PC-9 (cell line): ENCODE measurements at regions of chr20 and their contacts with region 1.

Region 1: GRCh38 chr20:35849706-35850105 is 77.9 kb downstream of the PHF20 start:
- DNase-seq: no peak
- H3K4me3 ChIP-seq: no peak overlapping the region
- H3K27ac ChIP-seq: no peak overlapping the region
- H3K4me1 ChIP-seq: no peaks in the 10 kb centered on the region
- H3K27me3 ChIP-seq: no peaks in the 10 kb centered on the region
- CTCF ChIP-seq: no peak

Region 2: DNA sequence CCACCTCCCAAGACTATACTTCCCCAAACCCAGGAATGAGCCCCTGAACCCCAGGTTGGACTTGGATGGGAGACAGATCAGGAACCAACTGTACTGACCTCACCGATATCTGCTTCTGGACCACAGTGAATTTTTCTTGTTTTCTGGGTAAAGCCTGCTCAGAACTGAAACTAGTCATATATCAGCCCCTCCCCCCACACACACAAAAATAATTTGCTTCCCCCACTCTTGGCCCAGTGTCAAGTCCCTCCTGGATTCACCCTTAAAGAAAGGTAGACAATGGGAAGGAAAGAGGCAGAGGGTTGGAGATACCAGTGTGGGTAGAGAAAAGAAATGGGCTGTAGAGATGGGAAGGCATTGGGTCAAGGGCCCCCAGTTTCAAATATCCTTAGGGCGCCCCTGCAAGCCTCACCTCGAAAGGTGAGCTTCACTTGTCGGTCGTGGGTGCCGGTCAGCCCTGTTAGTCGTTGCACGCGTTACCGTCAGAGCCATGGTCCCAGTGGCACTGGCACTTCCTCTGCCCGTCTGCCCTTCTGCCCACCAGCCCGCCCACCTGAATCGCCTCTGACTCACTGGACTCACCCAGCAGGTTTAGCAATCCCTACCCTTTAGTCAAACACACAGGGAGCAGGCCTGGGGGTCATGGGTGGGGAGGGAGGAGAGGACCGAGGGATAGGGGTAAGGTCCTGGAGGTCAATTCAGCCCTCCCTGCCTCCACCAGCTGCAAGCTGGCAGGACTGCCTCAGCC is 242.5 kb before region 1 on chr20:
- CTCF ChIA-PET with region 1: no interaction called
- POLR2A ChIA-PET with region 1: interaction called, 31 read pairs
- intact Hi-C with region 1: no loop called
- DNase-seq: peak; percentile 88 to 90
- H3K4me3 ChIP-seq: peak overlapping the region; percentile 57; the same call in 1 of the 2 replicates
- H3K27ac ChIP-seq: peak overlapping the region; percentile 57
- H3K4me1 ChIP-seq: peaks cover 39% of the 10 kb centered on the region
- H3K27me3 ChIP-seq: no peaks in the 10 kb centered on the region
- CTCF ChIP-seq: no peak

Region 3: GRCh38 chr20:35828434-35828833 is 21.3 kb before region 1 on chr20:
- CTCF ChIA-PET with region 1: no interaction called
- POLR2A ChIA-PET with region 1: interaction called, 22 read pairs
- intact Hi-C with region 1: no loop called
- DNase-seq: no peak
- H3K4me3 ChIP-seq: no peak overlapping the region
- H3K27ac ChIP-seq: no peak overlapping the region
- H3K4me1 ChIP-seq: no peaks in the 10 kb centered on the region
- H3K27me3 ChIP-seq: no peaks in the 10 kb centered on the region
- CTCF ChIP-seq: no peak

Region 4: DNA sequence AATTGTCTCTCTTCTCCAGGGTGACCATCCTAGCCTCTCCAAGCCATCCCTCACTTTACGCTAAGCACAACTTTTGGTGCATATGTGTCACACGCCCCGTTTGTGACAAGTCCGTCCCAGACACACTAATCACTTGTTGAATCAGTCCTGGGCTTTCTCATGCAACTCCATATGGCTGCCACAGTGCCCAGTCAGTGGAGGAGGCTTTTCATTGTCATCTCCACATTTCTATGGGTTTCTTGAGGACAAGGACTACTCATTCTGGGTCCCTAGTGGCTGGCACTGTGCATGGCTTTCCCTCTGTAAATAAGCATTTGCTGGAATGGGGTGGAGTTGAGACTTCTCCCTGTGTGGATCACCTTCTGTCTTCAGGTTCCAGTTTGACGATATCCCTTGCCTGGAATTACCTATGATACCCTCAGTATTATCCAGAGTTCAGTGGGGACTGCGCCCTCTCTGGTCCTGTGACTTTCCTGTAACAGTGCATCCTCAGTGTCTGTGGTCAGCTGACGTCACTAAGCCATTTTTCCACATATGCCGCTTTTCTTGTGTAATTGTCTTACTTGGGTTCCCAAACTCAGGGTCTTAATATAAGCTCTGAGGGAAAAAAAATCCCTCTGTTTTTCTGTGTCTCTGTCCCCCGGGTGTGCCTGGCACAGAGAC is 631.8 kb after region 1 on chr20:
- CTCF ChIA-PET with region 1: no interaction called
- POLR2A ChIA-PET with region 1: no interaction called
- intact Hi-C with region 1: no loop called
- DNase-seq: no peak
- H3K4me3 ChIP-seq: no peak overlapping the region
- H3K27ac ChIP-seq: no peak overlapping the region
- H3K4me1 ChIP-seq: peaks cover 14% of the 10 kb centered on the region
- H3K27me3 ChIP-seq: no peaks in the 10 kb centered on the region
- CTCF ChIP-seq: no peak